ENCODE measurements at regions of chr6 and their contacts with region 1.

Region 1: DNA sequence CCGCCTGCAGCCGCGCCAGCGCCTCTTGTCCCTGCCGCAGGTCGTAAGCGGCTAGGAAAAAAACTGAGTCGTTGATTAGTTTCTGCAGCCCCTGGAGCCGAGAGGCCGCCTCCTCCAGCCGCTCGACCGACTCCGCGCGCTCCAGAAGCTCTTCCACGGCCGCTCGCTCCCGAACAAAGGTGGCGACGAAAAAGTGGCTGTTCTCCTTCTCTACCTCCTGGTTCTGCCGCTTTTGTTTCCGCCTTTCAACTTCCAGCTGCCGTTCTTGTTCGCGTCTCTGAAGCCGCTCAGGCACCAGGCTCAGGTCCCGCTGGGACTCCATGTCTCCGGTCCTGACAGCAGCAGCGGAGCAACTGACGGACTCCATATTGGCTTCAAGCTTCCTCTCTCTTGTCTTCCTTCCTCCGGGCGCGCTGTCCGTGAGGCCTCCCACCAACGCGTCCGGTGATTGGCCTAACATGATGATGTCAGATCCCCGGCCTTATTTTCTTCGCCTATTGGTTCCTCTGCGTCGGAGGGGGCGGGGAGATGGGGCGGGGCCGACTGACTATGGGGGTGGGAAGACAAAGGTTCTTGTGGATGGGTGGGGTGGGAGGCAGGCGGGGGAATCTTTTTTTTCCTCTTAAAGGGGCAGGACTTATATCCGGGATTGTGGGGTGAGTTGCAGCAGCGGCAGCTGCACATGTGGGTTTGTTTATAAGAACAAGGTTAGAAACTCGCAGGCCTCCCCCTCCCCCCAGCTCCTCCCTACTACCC is at the start of gene TBCC:
- DNase-seq: peak; percentile 85
- ATAC-seq: peak; percentile 83
- H3K4me3 Mint-ChIP-seq: peak within 1 kb of the TSS; percentile 100
- H3K27ac Mint-ChIP-seq: peak within 1 kb of the TSS; percentile 100
- H3K4me1 Mint-ChIP-seq: peaks cover 21% of the 10 kb centered on the region
- H3K27me3 Mint-ChIP-seq: no peaks in the 10 kb centered on the region
- total RNA-seq, gene TBCC: 48.6 to 50.4 TPM

Region 2: GRCh38 chr6:42692137-42692911 is 53.6 kb before region 1 on chr6:
- POLR2A ChIA-PET with region 1: interaction called, 17 read pairs
- DNase-seq: no peak
- ATAC-seq: peak; percentile 43
- H3K4me3 Mint-ChIP-seq: peak overlapping the region; percentile 59
- H3K27ac Mint-ChIP-seq: peak overlapping the region; percentile 83
- H3K4me1 Mint-ChIP-seq: peaks cover 39% of the 10 kb centered on the region
- H3K27me3 Mint-ChIP-seq: no peaks in the 10 kb centered on the region

Region 3: DNA sequence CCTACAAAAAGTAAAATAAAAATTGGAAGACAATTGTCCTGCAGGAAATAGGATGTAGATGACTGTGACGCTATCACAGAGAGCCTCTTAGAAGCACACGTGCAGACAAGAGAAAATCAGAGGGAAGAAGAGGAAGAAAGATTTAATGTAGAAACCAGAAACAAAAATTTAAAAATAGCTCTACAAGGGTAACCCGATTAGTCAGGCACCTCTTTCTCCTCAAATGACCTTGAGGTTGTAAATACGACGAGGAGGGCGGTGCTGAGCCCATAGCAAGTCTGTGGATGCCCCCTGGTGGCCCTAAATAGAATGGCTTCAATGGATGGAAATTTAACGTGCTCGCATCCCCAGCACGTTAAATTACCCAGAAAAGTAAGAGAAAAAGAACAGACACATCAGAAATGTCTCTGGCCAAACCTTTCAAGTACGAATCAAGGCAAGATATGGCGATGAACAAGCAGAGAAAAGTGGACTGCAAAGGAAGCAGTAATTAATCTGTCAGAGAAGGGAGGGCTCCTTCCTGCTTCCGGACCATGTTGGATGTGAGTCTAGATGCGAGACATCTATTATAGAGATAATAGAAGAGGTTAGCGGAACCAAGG is 19.3 kb before region 1 on chr6:
- POLR2A ChIA-PET with region 1: interaction called, 18 read pairs
- DNase-seq: peak; percentile 43
- ATAC-seq: peak; percentile 90
- H3K4me3 Mint-ChIP-seq: peak overlapping the region; percentile 89
- H3K27ac Mint-ChIP-seq: peak overlapping the region; percentile 88
- H3K4me1 Mint-ChIP-seq: peaks cover 13% of the 10 kb centered on the region
- H3K27me3 Mint-ChIP-seq: peaks cover 1% of the 10 kb centered on the region

Region 4: DNA sequence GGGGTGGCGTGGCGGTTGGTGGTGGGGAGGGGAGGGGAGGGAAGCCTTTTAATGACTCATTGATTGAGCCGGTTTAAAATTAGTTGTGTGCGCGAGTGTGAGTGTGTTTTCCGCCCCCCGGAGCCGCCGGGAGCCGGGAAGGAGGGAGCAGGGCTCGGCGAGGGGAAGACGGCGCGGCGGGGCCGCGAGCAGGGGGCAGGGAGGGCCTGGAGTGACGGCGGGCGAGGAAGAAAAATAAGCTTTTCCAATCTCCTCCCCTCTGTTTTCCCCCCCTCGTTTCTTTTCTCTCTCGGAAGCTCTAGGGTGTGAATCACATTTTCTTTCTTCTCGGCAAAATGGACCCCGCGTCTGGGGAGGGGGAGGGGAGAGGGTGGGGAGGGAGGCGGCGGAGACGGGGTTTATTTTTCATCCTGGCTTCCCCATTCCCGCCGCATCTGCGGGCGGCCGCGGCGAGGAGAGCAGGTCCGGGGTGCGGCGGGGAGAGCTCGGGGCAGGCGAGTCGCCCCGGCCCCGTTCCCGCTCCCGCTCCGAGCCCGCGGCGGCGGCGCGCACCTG is 36.8 kb after region 1 on chr6:
- POLR2A ChIA-PET with region 1: interaction called, 450 read pairs
- DNase-seq: peak; percentile 73
- ATAC-seq: peak; percentile 38
- H3K4me3 Mint-ChIP-seq: peak overlapping the region; percentile 95
- H3K27ac Mint-ChIP-seq: peak overlapping the region; percentile 99
- H3K4me1 Mint-ChIP-seq: peaks cover 34% of the 10 kb centered on the region
- H3K27me3 Mint-ChIP-seq: no peaks in the 10 kb centered on the region

Region 5: DNA sequence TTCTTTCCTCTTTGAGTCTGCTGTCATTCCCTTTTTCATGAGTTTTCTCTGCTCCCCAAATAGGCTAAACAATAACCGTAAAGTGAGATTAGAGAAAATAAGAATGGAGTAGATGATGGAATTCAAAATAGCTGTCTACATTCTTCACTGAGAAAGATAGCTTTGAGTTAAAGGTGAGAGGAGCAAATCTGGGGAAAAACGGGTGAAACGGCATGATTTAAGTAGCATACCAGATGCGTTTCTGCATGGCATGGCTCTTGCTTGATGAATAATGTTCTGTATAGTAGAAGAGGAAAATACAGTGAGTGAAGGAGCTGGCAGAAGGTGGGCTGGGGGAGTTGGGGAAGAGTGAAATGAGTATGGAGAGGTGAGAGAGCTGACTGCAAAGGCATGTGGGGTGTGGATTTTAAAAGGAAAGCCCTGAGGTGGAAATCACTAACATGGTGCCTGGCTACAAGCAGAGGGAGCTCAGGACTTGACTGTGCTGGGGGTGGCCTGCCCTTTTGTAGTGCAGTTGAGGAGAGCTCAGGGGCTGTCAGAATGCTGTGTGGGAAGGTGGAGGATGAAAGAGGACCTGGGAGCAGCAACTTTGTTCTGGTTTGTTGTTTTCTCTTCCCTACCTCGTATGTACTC is 44.8 kb after region 1 on chr6:
- POLR2A ChIA-PET with region 1: interaction called, 450 read pairs
- DNase-seq: no peak
- ATAC-seq: no peak
- H3K4me3 Mint-ChIP-seq: no peak overlapping the region
- H3K27ac Mint-ChIP-seq: peak overlapping the region; percentile 10
- H3K4me1 Mint-ChIP-seq: peaks cover 21% of the 10 kb centered on the region
- H3K27me3 Mint-ChIP-seq: no peaks in the 10 kb centered on the region

Region 6: DNA sequence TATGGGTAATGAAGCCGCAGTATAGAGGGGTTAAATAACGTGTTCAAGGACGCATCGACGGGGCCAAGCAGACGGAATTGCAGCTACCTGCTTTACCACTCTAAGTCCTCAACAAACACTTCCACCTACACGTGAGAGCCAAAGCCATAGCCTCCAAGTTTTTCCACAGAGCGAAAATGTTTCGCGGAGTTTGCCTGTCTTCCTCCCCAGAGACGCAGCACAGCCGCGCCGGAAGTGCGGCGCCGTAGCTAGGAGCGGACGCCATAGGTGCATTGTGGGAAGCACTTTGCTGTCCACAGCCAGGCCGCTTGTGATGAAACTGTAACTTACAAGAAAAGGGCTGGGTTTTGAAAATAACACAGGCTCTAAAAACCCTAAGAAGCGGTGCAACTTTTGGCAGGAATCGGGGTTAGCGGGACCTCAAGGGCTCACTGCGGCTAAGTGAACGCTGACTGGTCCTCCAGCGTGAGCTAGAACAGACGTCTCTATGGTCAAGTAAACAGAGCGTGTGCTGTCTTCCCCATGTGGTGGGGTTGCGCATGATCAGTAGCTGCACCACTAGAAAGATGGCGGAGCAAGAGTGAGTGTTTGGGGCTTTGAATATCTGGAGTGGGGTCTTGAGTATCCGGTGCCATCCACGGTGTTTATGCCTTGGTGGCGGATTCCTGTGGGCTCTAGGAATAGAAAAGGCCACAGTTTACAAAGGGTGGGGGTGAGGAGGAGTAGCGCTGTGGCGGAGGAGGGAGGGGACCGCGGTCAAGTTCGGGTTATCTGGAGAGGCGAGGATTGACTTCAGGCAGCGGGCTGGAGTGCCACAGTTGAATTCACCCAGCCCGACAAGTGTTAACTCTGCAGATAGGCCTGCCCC is 133.7 kb after region 1 on chr6 and contains the start of gene RPL7L1:
- POLR2A ChIA-PET with region 1: interaction called, 44 read pairs
- DNase-seq: peak; percentile 82
- ATAC-seq: peak; percentile 97
- H3K4me3 Mint-ChIP-seq: peak within 1 kb of the TSS; percentile 91
- H3K27ac Mint-ChIP-seq: peak within 1 kb of the TSS; percentile 96
- H3K4me1 Mint-ChIP-seq: peaks cover 12% of the 10 kb centered on the region
- H3K27me3 Mint-ChIP-seq: no peaks in the 10 kb centered on the region
- total RNA-seq, gene RPL7L1: 77.6 to 79.3 TPM

Region 7: DNA sequence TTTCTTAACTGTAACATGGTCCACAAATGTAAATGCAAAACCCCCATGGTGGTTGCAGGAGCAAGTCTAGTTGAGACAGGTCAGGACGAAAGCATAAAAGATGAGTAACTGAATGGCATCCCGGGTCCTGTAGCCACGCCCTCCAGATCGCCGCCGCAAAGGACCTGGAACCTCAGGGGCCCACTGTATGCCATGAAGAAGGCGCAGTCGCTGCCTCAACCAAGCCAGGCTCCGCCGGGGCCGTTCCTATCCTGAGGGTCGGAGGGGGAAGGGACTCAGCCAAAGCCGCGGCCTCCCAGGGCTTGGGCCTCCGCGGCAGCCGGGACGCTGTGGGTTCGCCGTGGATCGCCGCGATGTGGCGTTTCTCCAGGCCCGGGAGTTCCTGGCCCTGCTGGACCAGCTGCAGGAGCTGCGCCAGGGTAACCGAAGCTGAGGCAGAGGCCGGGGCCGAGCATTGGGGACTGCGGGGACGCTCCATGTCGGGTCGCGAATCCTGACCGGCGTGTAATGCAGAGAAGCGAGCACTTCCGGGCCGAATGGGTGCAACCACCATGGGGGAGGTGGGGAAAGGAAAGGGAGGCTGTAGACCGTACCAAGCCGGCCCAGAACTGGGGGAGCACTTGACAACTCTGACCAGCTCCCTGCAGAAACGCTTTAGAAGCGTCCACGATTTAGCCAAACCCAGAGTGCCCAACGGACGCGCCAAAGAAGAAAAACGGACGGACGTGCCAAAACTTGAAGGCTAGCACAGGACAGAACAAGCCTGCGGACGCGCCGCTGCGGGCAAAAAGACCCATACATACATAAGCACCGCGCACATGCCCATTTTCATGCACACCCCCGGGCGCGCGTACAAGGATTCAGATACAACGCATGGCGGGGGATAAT is 144.7 kb after region 1 on chr6:
- POLR2A ChIA-PET with region 1: interaction called, 12 read pairs
- DNase-seq: peak; percentile 88
- ATAC-seq: peak; percentile 94
- H3K4me3 Mint-ChIP-seq: peak overlapping the region; percentile 89
- H3K27ac Mint-ChIP-seq: peak overlapping the region; percentile 97
- H3K4me1 Mint-ChIP-seq: peaks cover 26% of the 10 kb centered on the region
- H3K27me3 Mint-ChIP-seq: no peaks in the 10 kb centered on the region

Measured in activated naive CD8-positive, alpha-beta T cell treated with anti-CD3 and anti-CD28 coated beads, Interleukin-2, amount 10 ng/mL, durations not matched to agents 7 days and 5 days (primary cell).